ENCODE measurements at regions of chr21 and their contacts with region 1.

Region 1: GRCh38 chr21:33127154-33127893 is 57.4 kb downstream of the OLIG1 start:
- DNase-seq: peak; percentile 78 to 91
- H3K4me3 ChIP-seq: peak overlapping the region; percentile 3; the same call in 1 of the 2 replicates
- H3K4me1 ChIP-seq: peaks cover 18% of the 10 kb centered on the region
- H3K27me3 ChIP-seq: no peaks in the 10 kb centered on the region; the same call in 1 of the 2 replicates

Region 2: GRCh38 chr21:32834916-32835235 is 292.4 kb before region 1 on chr21:
- in situ Hi-C with region 1: loop called (anchors 5 kb)
- DNase-seq: peak; percentile 40 to 67
- H3K4me3 ChIP-seq: no peak overlapping the region
- H3K4me1 ChIP-seq: peaks cover 4% of the 10 kb centered on the region; the same call in 1 of the 2 replicates
- H3K27me3 ChIP-seq: no peaks in the 10 kb centered on the region

Region 3: DNA sequence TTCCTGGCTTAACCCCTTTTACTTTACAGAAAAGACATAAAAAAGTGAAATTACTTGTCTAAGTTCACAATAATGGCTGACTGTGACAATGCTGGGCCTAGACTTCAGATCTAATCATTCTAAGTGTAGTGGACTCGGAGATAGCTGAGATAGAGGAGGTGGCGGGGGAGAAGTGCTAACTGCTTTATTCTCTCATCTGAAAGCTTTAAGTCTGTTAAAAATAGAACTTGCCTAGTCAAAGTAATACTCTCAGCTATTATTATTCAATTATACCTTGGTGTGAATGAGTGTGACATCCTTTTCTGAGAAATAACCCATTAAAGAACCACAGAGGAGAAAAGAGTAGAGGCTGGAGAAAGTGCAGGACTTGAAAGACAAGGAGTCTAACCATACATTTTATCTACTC is 197.7 kb before region 1 on chr21:
- in situ Hi-C with region 1: loop called (anchors 10 kb)
- DNase-seq: no peak
- H3K4me3 ChIP-seq: no peak overlapping the region
- H3K4me1 ChIP-seq: peaks cover 10% of the 10 kb centered on the region
- H3K27me3 ChIP-seq: no peaks in the 10 kb centered on the region

Region 4: DNA sequence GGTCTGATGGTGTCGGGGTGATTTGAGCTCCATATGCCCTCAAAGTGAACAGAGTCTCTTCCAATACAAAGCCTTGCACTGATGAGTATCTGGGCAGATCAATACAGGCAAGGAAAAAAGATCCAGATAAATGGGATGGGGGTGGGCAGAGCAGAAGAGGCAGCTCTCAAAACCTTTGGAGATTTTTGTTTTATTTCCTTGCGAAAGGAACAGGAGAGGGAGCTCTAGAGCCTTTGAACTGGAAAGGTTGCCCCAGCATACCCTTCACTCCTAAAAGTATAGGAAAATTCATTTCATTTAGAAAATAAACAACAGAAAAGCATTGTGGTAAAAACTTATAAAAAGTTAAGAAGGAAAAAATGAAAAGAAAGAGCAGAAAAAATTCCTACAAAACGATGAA is 133.0 kb before region 1 on chr21:
- in situ Hi-C with region 1: loop called (anchors 10 kb)
- DNase-seq: peak in 1 of 2 experiments; percentile 42
- H3K4me3 ChIP-seq: no peak overlapping the region
- H3K4me1 ChIP-seq: no peaks in the 10 kb centered on the region
- H3K27me3 ChIP-seq: no peaks in the 10 kb centered on the region

Region 5: GRCh38 chr21:33069976-33070811 is 57.1 kb before region 1 on chr21 and contains the start of gene OLIG1:
- in situ Hi-C with region 1: no loop called
- DNase-seq: peak; percentile 51 to 79
- H3K4me3 ChIP-seq: peak within 1 kb of the TSS; percentile 36
- H3K4me1 ChIP-seq: peaks cover 4% of the 10 kb centered on the region
- H3K27me3 ChIP-seq: no peaks in the 10 kb centered on the region; the same call in 1 of the 2 replicates